Aorta (tissue), 5 donors: ENCODE measurements at regions of chr2 and their contacts with region 1.

Region 1: DNA sequence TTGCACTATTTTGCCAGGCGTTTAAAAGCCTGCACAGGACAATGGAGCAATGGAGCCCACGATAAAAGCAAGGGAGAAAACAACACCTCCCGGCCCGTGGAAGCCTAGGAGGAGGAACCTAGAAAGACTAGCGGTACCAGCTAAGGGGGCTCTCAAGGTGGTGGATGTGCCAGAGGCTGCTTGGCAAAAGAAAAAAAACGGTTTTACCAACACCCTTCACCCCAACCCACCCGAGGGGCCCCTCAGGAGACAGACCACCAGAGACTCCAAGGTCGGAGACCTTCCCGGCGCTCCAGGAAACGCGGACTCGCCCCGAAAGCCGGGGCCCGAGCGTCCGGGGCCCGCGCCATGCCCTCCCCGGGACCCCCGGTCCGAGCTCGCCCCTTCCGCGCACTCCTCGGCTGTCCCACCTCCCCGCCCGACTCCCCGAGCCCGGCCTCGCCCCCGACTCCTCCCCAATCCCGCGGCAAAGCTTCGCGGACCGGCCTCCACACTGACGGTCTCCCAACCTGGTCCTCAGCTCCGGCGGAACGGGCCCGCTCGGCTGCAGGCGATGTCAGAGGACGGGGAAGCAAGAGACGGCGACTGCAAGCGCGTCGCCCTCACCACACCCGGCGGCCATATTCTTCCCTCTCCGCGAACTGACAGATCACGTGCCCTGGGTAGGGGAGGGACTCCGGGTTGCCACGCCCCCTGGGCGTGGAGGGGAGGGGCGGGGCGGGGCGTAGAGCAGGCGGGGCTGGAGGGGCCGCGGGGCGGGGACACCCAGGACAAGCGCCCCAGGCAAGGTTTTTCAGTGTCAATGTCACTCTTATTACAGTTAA is at the start of gene KIDINS220:
- DNase-seq: peak; percentile 87 to 95
- ATAC-seq: peak; percentile 97
- H3K4me3 ChIP-seq: peak within 1 kb of the TSS; percentile 50 to 88
- H3K27ac ChIP-seq: peak within 1 kb of the TSS in 1 of 2 donors; percentile 58
- H3K4me1 ChIP-seq: no peaks in the 10 kb centered on the region
- H3K27me3 ChIP-seq: no peaks in the 10 kb centered on the region
- total RNA-seq, gene KIDINS220: 67.9 to 81.6 TPM

Region 2: GRCh38 chr2:8821276-8822217 is 15.6 kb before region 1 on chr2:
- intact Hi-C with region 1: loop called in 1 of 2 experiments (anchors 2 kb)
- DNase-seq: peak in 1 of 2 donors; percentile 69
- ATAC-seq: peak; percentile 95
- H3K4me3 ChIP-seq: peak overlapping the region in 1 of 2 donors; percentile 64
- H3K27ac ChIP-seq: peak overlapping the region; percentile 54 to 86
- H3K4me1 ChIP-seq: no peaks in the 10 kb centered on the region
- H3K27me3 ChIP-seq: no peaks in the 10 kb centered on the region

Region 3: GRCh38 chr2:9003616-9004337 is 166.6 kb after region 1 on chr2 and contains the start of gene MBOAT2:
- intact Hi-C with region 1: loop called in 1 of 2 experiments (anchors 10 kb)
- DNase-seq: peak; percentile 91 to 96
- ATAC-seq: peak; percentile 96
- H3K4me3 ChIP-seq: peak within 1 kb of the TSS; percentile 71 to 87
- H3K27ac ChIP-seq: peak within 1 kb of the TSS in 1 of 2 donors; percentile 43
- H3K4me1 ChIP-seq: no peaks in the 10 kb centered on the region
- H3K27me3 ChIP-seq: no peaks in the 10 kb centered on the region
- total RNA-seq, gene MBOAT2: 18.4 to 26.3 TPM

Region 4: GRCh38 chr2:9644603-9645002 is 807.4 kb after region 1 on chr2:
- intact Hi-C with region 1: no loop called
- DNase-seq: no peak
- ATAC-seq: no peak
- H3K4me3 ChIP-seq: no peak overlapping the region
- H3K27ac ChIP-seq: no peak overlapping the region
- H3K4me1 ChIP-seq: no peaks in the 10 kb centered on the region
- H3K27me3 ChIP-seq: no peaks in the 10 kb centered on the region